Colonic mucosa (tissue), 4 donors: ENCODE measurements at regions of chr10 and their contacts with region 1.

Region 1: DNA sequence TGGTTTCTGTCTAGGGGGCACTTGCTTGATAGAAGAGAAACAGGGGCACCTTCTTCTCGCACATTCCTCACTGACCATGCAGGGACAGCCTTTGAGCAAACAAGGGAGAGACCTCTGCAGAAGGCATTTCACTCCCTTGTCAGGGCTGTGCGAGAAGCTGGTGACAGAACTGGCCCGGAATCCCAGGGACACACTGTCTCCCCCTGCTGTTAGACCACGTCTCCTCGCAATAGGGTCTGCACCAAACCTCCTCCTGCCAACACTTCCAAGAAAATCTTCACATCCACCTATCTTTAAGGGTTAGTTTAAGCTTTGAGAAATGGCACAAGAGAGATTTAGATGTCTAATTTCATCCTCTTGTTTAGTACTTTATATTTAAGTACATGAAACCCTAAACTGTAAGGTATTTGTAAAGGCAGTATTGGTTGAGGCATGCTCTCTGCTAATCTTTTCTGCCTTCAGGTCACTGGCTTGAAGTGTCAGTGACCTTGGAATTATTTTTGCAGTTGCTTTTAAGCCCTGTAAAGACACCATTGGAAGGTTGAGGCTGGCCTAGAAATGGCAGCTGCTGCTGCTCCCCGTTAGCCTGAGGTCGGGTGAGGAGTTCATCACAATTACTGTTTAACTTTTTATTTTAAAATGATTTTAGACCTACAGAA is 37.0 kb downstream of the RBM20 start:
- DNase-seq: peak; percentile 23
- H3K4me3 ChIP-seq: no peak overlapping the region
- H3K27ac ChIP-seq: no peak overlapping the region
- H3K4me1 ChIP-seq: no peaks in the 10 kb centered on the region
- H3K27me3 ChIP-seq: no peaks in the 10 kb centered on the region
- CTCF ChIP-seq: peak; percentile 39

Region 2: DNA sequence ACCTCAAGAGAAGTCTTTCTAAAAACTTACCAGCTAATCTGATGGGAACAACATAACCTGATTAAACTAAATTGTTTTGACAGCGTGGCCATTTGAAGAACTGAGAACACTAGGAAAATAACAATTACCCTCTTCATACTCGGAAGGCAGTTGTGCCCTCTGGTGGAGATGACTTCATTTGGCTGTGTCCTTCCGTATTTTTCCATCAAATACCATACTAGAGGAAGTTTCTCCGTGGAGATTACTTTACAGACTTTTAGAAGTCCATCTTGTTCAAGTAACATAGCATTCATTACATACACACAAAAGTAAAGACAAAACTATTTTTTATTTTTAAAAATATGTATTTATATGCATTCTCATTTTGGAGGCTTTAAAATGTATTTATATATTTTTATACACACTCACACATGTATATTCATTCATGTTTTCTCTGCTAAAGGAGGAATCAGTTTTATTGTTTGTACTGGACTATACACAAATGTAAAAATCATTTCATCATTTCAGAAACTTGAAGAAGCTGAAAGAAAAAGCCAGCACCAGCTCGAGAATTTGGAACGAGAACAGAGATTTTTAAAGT is 401.7 kb before region 1 on chr10:
- intact Hi-C with region 1: no loop called
- DNase-seq: peak; percentile 65
- H3K4me3 ChIP-seq: no peak overlapping the region
- H3K27ac ChIP-seq: no peak overlapping the region
- H3K4me1 ChIP-seq: peaks cover 3% of the 10 kb centered on the region
- H3K27me3 ChIP-seq: no peaks in the 10 kb centered on the region
- CTCF ChIP-seq: peak; percentile 60

Region 3: DNA sequence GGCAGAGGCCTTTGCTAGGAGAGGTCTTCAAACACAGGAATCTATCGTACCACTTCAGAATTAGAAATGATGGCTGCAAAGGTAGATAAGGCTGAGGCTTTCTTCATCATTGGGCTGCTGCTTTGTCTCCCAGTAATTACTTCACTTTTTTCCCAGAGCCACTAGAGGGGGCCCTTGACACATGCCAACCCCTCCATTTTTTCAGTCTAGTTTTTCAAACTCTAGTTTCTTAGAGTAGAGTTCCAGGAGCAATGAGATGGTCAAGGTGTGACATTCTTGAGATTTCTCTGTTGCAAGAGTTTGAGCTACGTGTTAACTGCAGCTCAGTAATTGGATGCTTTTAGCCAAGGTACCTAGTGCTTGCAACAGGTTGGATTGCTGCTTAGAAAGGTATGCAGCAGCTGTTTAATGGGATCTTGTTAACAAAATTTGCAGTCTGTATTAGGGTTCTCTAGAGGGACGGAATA is 70.8 kb before region 1 on chr10:
- intact Hi-C with region 1: loop called (anchors 5 kb)
- DNase-seq: peak; percentile 60
- H3K4me3 ChIP-seq: no peak overlapping the region
- H3K27ac ChIP-seq: no peak overlapping the region
- H3K4me1 ChIP-seq: no peaks in the 10 kb centered on the region
- H3K27me3 ChIP-seq: no peaks in the 10 kb centered on the region
- CTCF ChIP-seq: peak; percentile 81